ENCODE measurements at regions of chr1 and their contacts with region 1.

Region 1: DNA sequence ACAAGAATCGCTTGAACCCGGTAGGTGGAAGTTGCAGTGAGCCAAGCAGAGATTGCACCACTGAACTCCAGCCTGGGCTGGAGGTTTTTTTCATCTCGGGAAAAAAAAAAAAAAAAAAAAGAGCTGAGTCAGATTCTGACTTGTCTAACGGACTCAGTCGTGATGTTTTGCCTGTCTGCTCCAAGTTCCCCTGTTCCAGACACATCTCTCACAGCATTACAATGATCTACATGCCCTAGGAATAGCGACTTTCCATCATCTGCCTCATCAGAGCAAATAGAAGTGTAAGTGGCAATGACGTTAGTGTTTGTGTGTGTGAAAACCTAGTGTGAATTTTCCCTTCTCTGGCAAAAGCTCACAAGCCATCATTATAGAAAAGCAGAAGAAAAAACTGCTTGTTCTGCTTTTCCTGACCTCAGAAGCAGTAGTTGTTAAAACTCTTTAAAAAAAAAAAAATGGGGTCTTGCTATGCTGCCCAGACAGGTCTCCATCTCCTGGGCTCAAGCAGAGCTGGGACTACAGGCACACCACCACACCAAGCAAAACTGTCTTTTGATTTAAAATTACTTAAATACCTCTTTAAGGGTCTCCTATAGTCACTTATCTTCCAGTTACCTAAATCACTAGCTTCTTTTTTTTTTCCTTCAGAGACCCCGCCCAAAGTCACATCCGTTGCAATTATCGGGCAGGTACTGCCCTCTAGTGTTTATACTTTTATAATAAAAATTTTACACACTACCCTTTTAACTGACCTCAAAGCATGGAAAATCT is 37.3 kb downstream of the PLEKHO1 start:
- DNase-seq: no peak
- ATAC-seq: peak; percentile 65
- H3K4me3 Mint-ChIP-seq: no peak overlapping the region
- H3K27ac Mint-ChIP-seq: no peak overlapping the region
- H3K4me1 Mint-ChIP-seq: peaks cover 2% of the 10 kb centered on the region; the same call in 1 of the 2 replicates
- H3K27me3 Mint-ChIP-seq: no peaks in the 10 kb centered on the region
- CTCF ChIP-seq: peak; percentile 48; the same call in 1 of the 2 replicates

Region 2: DNA sequence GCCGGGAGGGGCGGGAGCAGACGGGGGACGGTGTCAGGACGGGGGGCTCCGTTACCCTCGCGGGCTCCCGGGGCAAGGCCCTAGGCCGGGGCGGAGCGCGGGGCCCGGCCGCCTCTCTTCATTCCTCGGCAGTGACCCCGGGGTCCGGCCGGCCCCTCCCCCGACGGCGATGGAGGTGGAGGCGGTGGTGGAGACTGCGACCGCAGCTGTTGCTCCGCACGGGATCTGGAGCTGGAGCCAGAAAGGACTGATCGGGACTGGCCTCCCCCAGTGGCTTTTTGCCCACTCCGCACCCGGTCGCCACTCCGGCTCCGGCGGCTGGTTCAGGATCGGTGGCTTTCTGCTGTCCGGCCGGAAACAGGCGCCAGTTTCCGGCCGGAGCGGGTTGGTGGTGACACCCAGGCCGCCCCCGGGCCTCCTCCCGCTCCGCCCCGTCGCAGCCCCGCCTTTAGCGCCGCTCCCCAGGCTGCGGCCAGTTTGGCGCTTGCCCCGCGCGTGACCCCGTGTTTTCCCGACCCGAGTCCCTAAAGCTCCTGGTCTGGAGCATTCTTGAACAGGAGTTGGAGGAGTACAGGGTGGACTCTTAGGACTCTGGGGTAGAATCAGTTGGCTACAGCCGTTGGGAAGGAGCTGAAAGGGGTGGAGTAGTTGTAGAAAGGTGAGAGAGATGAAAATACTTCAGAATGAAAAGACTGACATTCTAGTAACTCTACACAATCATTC is 176.4 kb before region 1 on chr1 and contains the start of gene OTUD7B:
- CTCF ChIA-PET with region 1: interaction called, 11 read pairs
- POLR2A ChIA-PET with region 1: no interaction called
- DNase-seq: peak; percentile 86
- ATAC-seq: peak; percentile 86
- H3K4me3 Mint-ChIP-seq: peak within 1 kb of the TSS; percentile 94
- H3K27ac Mint-ChIP-seq: peak within 1 kb of the TSS; percentile 98
- H3K4me1 Mint-ChIP-seq: peaks cover 22% of the 10 kb centered on the region
- H3K27me3 Mint-ChIP-seq: no peaks in the 10 kb centered on the region
- CTCF ChIP-seq: no peak
- total RNA-seq, gene OTUD7B: 19.4 to 21.0 TPM (median 19.5 TPM) in 3 replicates

Region 3: GRCh38 chr1:150162862-150163706 is 23.9 kb before region 1 on chr1:
- CTCF ChIA-PET with region 1: interaction called, 22 read pairs
- POLR2A ChIA-PET with region 1: no interaction called
- DNase-seq: peak; percentile 82
- ATAC-seq: peak; percentile 95
- H3K4me3 Mint-ChIP-seq: peak overlapping the region; percentile 66
- H3K27ac Mint-ChIP-seq: peak overlapping the region; percentile 99
- H3K4me1 Mint-ChIP-seq: peaks cover 42% of the 10 kb centered on the region
- H3K27me3 Mint-ChIP-seq: no peaks in the 10 kb centered on the region
- CTCF ChIP-seq: no peak

Region 4: GRCh38 chr1:150176593-150176992 is 10.4 kb before region 1 on chr1:
- CTCF ChIA-PET with region 1: interaction called, 21 read pairs
- POLR2A ChIA-PET with region 1: no interaction called
- DNase-seq: no peak
- ATAC-seq: no peak
- H3K4me3 Mint-ChIP-seq: no peak overlapping the region
- H3K27ac Mint-ChIP-seq: no peak overlapping the region
- H3K4me1 Mint-ChIP-seq: no peaks in the 10 kb centered on the region
- H3K27me3 Mint-ChIP-seq: no peaks in the 10 kb centered on the region
- CTCF ChIP-seq: no peak